ENCODE measurements at regions of chr20 and their contacts with region 1.

Region 1: GRCh38 chr20:18287915-18288748 is at the start of gene ZNF133:
- DNase-seq: peak; percentile 97
- ATAC-seq: peak; percentile 98
- H3K4me3 Mint-ChIP-seq: peak within 1 kb of the TSS; percentile 98
- H3K27ac Mint-ChIP-seq: peak within 1 kb of the TSS; percentile 99
- H3K4me1 Mint-ChIP-seq: peaks cover 19% of the 10 kb centered on the region
- H3K27me3 Mint-ChIP-seq: peaks cover 14% of the 10 kb centered on the region
- total RNA-seq, gene ZNF133: 8.8 to 10.1 TPM

Region 2: GRCh38 chr20:16573001-16573965 is 1714.8 kb before region 1 on chr20 and contains the start of gene KIF16B:
- CTCF ChIA-PET with region 1: no interaction called
- POLR2A ChIA-PET with region 1: no interaction called
- intact Hi-C with region 1: loop called in 1 of 2 experiments (anchors 5 kb)
- DNase-seq: peak; percentile 92
- ATAC-seq: peak; percentile 87
- H3K4me3 Mint-ChIP-seq: peak within 1 kb of the TSS; percentile 85
- H3K27ac Mint-ChIP-seq: peak within 1 kb of the TSS; percentile 79
- H3K4me1 Mint-ChIP-seq: peaks cover 42% of the 10 kb centered on the region
- H3K27me3 Mint-ChIP-seq: no peaks in the 10 kb centered on the region
- total RNA-seq, gene KIF16B: 7.5 to 8.7 TPM

Region 3: GRCh38 chr20:17968366-17969279 is 319.5 kb before region 1 on chr20 and contains the starts of genes MGME1 and SNX5:
- CTCF ChIA-PET with region 1: interaction called, 3 read pairs
- POLR2A ChIA-PET with region 1: interaction called, 8 read pairs
- intact Hi-C with region 1: loop called (anchors 1 to 2 kb)
- DNase-seq: peak; percentile 100
- ATAC-seq: peak; percentile 91
- H3K4me3 Mint-ChIP-seq: peak within 1 kb of the TSS; percentile 87
- H3K27ac Mint-ChIP-seq: peak within 1 kb of the TSS; percentile 99
- H3K4me1 Mint-ChIP-seq: peaks cover 49% of the 10 kb centered on the region
- H3K27me3 Mint-ChIP-seq: no peaks in the 10 kb centered on the region
- total RNA-seq, gene MGME1: 24.1 to 29.7 TPM
- total RNA-seq, gene SNX5: 204 to 227 TPM

Region 4: DNA sequence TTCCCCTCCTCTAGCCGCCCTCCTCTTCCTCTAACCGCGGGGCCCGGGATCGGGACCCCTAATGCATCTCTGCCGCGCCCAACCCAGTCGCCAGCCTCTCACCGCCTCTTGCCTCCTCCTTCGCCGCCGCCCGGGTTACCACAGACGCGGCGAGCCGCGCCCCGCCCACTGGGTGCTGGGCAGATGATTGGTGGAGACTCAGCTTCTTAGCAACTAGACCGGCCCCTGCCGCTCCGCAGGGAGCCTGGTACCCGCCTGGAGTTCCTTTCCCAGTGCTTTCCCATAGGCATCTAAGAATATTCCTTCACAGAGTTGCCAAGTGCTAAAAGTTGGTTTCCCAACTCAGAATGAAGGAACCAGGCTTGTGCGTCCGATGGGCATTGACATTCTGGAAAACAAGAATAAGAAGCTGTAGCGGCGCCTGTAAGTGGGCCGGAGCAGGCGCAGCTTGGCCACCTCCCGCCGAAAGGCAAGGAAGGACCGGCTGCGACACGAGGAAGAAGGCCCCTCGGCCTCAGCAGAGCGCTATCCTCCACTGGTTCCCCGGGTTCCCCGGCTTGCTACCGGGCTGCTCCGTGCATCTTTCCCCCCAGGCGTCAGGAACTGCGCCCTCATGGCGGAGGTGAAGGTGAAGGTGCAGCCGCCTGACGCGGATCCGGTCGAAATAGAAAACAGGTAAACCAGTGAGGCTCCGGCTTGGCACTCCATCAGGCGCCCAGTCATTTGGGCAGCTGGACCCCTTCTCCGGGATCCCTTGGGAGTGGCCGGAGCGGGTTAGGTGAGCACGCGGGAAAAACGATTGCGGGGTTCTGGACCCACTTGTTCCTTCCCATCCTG is 179.0 kb after region 1 on chr20 and contains the starts of genes DZANK1 and POLR3F:
- CTCF ChIA-PET with region 1: no interaction called
- POLR2A ChIA-PET with region 1: interaction called, 8 read pairs
- intact Hi-C with region 1: loop called (anchors 1 kb)
- DNase-seq: peak; percentile 96
- ATAC-seq: peak; percentile 99
- H3K4me3 Mint-ChIP-seq: peak within 1 kb of the TSS; percentile 91
- H3K27ac Mint-ChIP-seq: peak within 1 kb of the TSS; percentile 89
- H3K4me1 Mint-ChIP-seq: peaks cover 21% of the 10 kb centered on the region
- H3K27me3 Mint-ChIP-seq: no peaks in the 10 kb centered on the region
- total RNA-seq, gene DZANK1: 1.4 to 2.0 TPM
- total RNA-seq, gene POLR3F: 9.8 to 11.8 TPM

Region 5: DNA sequence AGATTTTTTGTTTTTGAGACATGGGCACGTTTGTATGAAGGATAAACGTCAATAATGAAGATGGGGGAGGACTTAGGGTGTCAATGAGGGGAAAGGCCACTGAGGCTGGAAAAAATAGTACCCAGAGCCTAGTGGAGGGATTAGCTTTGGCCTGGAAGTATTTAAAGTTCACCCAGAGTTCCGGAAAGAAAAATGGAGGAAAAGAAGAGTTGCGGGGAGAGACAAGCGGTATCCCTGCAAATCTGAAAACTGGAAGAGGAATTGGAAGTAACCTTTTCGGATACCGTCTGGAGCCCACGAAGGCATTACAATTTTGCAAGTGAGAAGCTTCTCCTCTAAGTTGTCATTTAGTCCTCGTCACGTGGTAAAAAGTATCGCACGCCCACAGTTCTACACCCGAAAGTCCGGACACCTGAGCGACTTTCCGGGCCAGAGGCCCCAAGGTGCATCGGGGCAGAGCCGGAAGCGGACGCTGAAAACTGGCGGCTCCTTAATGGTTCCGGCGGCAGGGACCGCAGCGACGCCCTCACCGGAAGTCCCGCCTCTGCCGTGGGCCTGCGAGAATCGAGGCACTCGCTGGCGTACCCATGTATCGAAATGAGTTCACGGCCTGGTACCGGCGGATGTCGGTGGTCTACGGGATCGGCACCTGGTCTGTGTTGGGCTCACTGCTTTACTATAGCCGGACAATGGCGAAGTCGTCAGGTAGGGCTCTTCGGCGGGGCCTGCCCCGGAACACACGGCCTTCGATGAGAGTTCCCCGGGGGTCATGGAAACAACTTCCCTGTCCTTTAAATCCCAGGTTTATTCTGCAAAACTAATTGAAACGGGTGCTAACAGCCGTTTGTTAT is 279.0 kb after region 1 on chr20 and contains the start of gene SMIM26:
- CTCF ChIA-PET with region 1: no interaction called
- POLR2A ChIA-PET with region 1: no interaction called
- intact Hi-C with region 1: loop called (anchors 1 to 2 kb)
- DNase-seq: peak; percentile 97
- ATAC-seq: peak; percentile 100
- H3K4me3 Mint-ChIP-seq: peak within 1 kb of the TSS; percentile 98
- H3K27ac Mint-ChIP-seq: peak within 1 kb of the TSS; percentile 92
- H3K4me1 Mint-ChIP-seq: peaks cover 13% of the 10 kb centered on the region
- H3K27me3 Mint-ChIP-seq: no peaks in the 10 kb centered on the region
- total RNA-seq, gene SMIM26: 64.4 to 66.2 TPM

Region 6: DNA sequence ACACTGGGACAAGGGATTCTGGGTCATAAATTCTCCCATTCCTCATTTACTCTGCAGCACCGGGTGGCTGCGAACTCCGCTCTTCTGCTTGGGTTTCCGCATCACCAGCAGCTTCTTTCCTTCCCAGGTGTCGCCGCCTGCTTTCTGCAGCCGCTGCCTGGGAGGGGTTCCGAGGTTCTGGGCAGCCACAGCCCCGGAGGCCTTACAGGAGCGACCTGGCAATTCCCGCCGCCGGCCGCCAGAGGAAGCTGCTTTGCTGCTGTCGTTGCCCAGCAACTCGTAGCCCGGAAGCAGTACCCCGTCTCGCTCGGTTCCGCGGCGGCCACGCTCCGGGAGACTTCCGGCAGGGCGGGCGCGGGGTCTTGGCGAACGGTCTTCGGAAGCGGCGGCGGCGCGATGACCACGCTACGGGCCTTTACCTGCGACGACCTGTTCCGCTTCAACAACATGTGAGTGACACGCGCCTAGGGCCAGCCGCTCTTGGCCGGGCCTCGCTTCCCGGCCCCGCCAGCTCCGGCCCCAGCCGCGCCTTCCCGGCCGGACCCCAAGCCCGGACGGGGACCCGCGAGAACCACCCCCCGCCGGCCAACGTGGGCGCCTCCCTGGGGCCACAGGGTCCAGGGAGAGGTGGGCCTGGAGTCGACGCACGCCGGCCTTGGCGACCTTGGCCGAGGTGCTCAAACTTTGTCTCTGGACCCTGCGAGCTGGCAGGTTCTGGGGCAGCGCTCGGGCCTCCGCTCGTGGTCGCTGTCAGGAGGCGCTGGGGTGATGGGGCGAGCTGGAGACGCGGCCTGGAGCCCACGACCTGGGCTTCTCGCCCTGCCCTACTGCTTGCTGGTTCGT is 1729.1 kb after region 1 on chr20 and contains the start of gene NAA20:
- CTCF ChIA-PET with region 1: no interaction called
- POLR2A ChIA-PET with region 1: no interaction called
- intact Hi-C with region 1: loop called in 1 of 2 experiments (anchors 5 kb)
- DNase-seq: peak; percentile 96
- ATAC-seq: peak; percentile 98
- H3K4me3 Mint-ChIP-seq: peak within 1 kb of the TSS; percentile 93
- H3K27ac Mint-ChIP-seq: peak within 1 kb of the TSS; percentile 88
- H3K4me1 Mint-ChIP-seq: peaks cover 54% of the 10 kb centered on the region
- H3K27me3 Mint-ChIP-seq: no peaks in the 10 kb centered on the region
- total RNA-seq, gene NAA20: 58.6 to 88.7 TPM